ENCODE measurements at regions of chr1 and their contacts with region 1.

Region 1: DNA sequence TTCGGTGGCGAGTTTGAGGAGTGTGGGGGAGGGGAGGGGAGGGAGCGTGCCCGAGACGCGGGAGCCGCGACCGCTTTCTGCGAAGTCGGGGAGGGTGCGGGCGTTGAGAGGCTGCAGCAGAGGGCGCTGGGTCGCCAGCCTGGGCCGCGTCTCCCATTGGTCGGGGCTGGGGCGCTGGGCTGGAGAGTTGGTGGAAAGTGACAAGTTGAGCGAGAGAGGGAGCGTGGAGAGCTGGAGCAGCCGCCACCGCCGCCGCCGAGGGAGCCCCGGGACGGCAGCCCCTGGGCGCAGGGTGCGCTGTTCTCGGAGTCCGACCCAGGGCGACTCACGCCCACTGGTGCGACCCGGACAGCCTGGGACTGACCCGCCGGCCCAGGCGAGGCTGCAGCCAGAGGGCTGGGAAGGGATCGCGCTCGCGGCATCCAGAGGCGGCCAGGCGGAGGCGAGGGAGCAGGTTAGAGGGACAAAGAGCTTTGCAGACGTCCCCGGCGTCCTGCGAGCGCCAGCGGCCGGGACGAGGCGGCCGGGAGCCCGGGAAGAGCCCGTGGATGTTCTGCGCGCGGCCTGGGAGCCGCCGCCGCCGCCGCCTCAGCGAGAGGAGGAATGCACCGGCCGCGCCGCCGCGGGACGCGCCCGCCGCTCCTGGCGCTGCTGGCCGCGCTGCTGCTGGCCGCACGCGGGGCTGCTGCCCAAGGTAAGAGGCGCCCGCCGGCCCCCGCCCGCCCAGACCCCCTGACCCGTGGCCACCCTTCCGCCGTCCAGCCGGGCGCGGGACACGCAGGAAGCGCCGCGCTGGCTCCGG is at the start of gene ROR1:
- DNase-seq: peak; percentile 86
- H3K4me3 ChIP-seq: peak within 1 kb of the TSS; percentile 62 to 73 (median 72)
- H3K27ac ChIP-seq: peak within 1 kb of the TSS; percentile 40
- H3K4me1 ChIP-seq: peaks cover 15% of the 10 kb centered on the region
- H3K27me3 ChIP-seq: peaks cover 0 to 5% of the 10 kb centered on the region in 2 experiments
- CTCF ChIP-seq: peak; percentile 42 to 80
- POLR2A ChIP-seq: no peak
- total RNA-seq, gene ROR1: 3.5 and 10.9 TPM in 2 replicates

Region 2: DNA sequence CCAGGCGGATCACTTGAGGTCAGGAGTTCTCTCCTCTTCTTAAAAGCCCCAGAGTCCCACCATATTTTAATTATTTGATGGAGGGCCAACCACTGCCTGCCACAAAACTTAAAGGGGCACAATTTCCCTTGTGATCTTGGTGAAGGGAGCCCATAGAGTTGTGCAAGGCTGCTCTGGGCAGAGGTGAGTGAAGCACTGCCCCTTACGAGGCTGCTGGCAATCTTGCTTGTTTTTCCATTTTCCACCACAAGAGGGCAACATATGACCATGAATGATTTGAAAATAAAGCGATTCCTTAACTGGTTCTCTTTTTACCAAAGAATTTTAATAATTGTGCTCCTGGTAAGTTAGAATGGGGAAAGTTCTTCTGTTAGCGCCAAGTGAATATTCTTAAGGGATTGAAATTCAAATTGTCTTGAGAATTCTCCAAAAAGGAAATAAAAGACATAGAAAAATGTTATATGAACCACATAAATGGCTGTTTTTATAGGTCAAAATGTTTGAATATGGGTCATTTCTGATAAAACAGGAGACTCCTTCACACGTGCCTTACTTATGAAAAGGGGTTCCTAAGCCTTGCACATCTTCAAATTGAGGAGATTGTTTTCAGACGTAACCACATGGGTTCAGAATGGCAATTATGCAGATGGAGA is 158.1 kb before region 1 on chr1:
- CTCF ChIA-PET with region 1: no interaction called
- POLR2A ChIA-PET with region 1: no interaction called
- dilution Hi-C with region 1: no loop called
- intact Hi-C with region 1: loop called (anchors 5 kb)
- DNase-seq: peak; percentile 82
- H3K4me3 ChIP-seq: no peak overlapping the region
- H3K27ac ChIP-seq: no peak overlapping the region
- H3K4me1 ChIP-seq: no peaks in the 10 kb centered on the region
- H3K27me3 ChIP-seq: no peaks in the 10 kb centered on the region
- CTCF ChIP-seq: peak; percentile 50 to 59
- POLR2A ChIP-seq: no peak

Region 3: DNA sequence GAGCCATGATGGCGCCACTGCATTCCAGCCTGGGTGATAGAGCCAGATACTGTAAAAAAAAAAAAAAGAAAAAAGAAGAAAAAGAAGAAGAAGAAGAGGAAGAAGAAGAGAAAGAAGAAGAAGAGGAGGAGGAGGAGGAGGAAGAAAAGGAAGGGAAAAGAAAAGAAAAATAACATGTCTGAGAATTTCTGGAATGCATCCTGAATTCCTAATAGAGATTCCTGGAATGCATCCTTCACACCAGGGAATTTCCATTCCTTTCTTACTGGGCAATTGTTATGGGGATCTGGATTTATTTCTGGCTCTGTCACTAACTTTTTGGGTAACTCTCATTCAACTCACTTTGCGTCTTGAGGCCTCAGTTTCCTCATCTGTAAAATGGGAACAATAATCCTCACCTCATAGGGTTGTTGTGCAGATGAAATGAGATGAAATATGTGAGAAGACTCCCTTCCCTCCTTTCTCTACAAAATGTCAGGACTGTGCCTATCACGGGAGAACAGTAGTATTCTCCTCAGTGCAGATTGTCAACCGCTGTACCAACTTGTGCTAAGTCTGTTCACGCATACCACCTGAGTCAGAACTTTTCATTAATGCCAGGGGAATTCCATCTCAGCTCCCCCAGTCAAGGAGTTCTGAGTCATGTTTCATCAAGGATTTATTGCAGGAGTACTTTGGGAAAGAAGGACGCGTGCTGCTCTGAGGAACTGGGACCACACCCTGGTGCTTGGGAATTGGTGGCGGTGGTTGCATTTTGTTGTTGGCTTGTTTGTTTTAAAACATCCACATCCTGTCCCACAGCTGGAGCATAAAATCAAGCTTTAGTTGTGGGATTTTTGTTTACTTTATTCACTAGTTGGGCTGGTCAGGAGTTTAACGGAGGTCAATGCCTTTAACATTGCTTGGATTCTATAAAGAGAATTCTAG is 42.6 kb before region 1 on chr1:
- CTCF ChIA-PET with region 1: interaction called, 3 read pairs
- POLR2A ChIA-PET with region 1: no interaction called
- dilution Hi-C with region 1: no loop called
- intact Hi-C with region 1: loop called (anchors 1 kb)
- DNase-seq: peak; percentile 88
- H3K4me3 ChIP-seq: no peak overlapping the region
- H3K27ac ChIP-seq: peak overlapping the region; percentile 69
- H3K4me1 ChIP-seq: peaks cover 12% of the 10 kb centered on the region
- H3K27me3 ChIP-seq: no peaks in the 10 kb centered on the region
- CTCF ChIP-seq: no peak
- POLR2A ChIP-seq: no peak

Region 4: GRCh38 chr1:63753591-63753990 is 20.4 kb before region 1 on chr1:
- CTCF ChIA-PET with region 1: interaction called, 3 read pairs
- POLR2A ChIA-PET with region 1: no interaction called
- dilution Hi-C with region 1: no loop called
- intact Hi-C with region 1: loop called (anchors 1 kb)
- DNase-seq: peak; percentile 78
- H3K4me3 ChIP-seq: no peak overlapping the region
- H3K27ac ChIP-seq: peak overlapping the region; percentile 60
- H3K4me1 ChIP-seq: peaks cover 21% of the 10 kb centered on the region
- H3K27me3 ChIP-seq: peaks cover 0 to 3% of the 10 kb centered on the region in 2 experiments
- CTCF ChIP-seq: no peak
- POLR2A ChIP-seq: no peak